Activated naive CD4-positive, alpha-beta T cell treated with anti-CD3 and anti-CD28 coated beads for 36 hours (primary cell): ENCODE measurements at regions of chr11 and their contacts with region 1.

Region 1: DNA sequence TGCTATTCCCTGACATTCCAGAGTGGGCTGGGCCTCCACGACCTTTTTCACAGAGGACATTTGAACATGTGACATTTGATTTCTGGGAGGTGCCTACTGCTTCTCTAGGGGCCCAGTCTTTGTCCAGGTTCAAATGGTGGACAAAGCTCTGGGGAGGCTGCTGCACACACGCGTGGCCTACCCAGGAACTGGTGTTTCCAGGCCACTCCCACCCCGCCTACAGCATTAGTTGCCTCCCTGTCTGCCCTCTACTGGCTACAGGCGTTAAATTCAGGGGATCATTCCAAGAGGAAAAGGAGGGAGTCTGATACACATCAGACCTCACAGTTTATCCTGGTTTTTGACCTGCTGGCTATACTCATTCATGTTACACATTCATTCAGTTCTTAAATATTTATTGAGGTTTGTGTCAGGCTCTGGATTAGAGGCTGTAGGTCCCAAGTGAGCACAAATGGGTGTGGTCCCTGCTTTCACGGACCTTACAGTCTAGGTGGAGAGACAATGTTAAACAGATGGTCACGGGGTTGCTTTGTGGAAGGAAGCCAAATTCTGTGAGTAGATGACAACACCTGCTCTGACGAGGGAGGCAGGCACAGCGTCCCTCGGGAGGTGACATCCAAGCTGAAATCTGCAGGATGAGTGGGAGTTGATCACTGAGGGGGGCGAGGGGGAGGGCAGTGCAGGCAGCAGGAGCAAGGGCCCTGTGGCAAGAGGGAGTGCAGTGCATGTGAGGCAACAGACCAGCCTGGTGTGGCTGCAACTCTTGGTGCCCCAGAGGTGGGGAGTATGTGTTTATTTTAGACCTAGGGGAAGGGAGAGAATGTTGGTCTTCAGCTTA is 11.8 kb downstream of the TUB start:
- DNase-seq: peak; percentile 69
- H3K4me3 Mint-ChIP-seq: no peak overlapping the region
- H3K27ac Mint-ChIP-seq: no peak overlapping the region
- H3K4me1 Mint-ChIP-seq: peaks cover 2% of the 10 kb centered on the region
- H3K27me3 Mint-ChIP-seq: no peaks in the 10 kb centered on the region

Region 2: DNA sequence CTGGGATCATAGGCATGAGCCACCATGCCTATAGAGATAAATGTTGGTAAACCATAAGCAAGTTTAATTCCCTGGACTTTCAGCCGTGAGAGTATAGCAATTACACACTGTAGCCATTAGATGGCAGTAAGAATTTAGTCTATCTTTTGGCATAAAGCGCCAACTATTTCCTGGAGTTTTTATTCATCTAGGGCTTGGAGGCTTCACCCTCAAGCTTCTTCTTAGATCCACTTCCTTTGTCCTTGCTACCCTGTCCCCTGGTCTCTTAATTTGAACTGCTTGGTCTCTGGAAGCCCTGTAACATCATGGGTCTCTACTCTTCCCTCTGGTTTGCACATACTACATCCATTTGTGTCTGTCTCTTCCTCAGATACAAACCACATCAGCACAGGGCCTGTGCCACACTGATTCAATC is 200.0 kb before region 1 on chr11:
- CTCF ChIA-PET with region 1: interaction called, 8 read pairs
- intact Hi-C with region 1: loop called (anchors 2 kb)
- DNase-seq: no peak
- H3K4me3 Mint-ChIP-seq: no peak overlapping the region
- H3K27ac Mint-ChIP-seq: no peak overlapping the region
- H3K4me1 Mint-ChIP-seq: no peaks in the 10 kb centered on the region
- H3K27me3 Mint-ChIP-seq: peaks cover 7% of the 10 kb centered on the region

Region 3: GRCh38 chr11:8033305-8034105 is 59.3 kb before region 1 on chr11:
- CTCF ChIA-PET with region 1: interaction called, 92 read pairs
- intact Hi-C with region 1: loop called (anchors 1 kb)
- DNase-seq: peak; percentile 62
- H3K4me3 Mint-ChIP-seq: no peak overlapping the region
- H3K27ac Mint-ChIP-seq: no peak overlapping the region
- H3K4me1 Mint-ChIP-seq: peaks cover 4% of the 10 kb centered on the region
- H3K27me3 Mint-ChIP-seq: peaks cover 30% of the 10 kb centered on the region

Region 4: DNA sequence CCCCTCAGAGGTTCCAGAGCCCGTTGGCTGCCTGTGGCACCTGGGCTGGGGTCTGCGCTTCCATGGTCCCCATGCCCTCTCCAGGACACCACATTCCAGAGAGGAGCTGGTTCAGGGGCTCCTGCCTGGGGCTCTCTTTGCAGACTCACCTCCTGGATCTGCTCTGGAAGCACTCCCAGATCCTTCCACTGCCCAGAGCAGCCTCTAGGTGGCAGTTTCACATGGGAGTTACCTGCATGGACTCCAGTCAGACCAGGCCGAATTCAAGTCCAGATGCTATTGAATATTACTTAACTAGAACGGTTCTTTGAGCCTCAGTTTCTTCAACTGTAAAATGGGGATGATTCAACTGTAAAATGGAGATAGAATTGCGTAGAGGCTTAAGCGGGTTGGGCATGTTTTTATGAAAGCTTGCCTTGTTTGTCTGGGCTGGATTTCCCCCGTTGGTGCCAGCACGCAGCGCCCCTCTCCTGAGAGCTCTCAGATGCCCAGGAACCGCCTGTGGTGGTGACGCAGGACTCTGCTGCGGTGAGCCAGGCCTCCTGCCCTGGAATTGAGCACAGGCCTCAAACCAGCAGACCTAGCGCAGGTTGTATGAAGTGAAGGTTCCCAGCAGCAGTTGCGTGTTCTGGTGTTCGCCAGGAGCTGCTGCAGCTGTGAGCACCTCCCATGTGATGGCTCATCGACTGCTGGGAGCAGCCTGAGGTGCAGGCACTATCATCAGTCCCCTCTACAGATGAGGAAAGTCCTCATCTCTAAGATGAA is 126.6 kb after region 1 on chr11:
- CTCF ChIA-PET with region 1: no interaction called
- intact Hi-C with region 1: no loop called
- DNase-seq: peak; percentile 49
- H3K4me3 Mint-ChIP-seq: no peak overlapping the region
- H3K27ac Mint-ChIP-seq: no peak overlapping the region
- H3K4me1 Mint-ChIP-seq: no peaks in the 10 kb centered on the region
- H3K27me3 Mint-ChIP-seq: peaks cover 2% of the 10 kb centered on the region